Natural killer cell (primary cell): ENCODE measurements at regions of chr1 and their contacts with region 1.

Region 1: DNA sequence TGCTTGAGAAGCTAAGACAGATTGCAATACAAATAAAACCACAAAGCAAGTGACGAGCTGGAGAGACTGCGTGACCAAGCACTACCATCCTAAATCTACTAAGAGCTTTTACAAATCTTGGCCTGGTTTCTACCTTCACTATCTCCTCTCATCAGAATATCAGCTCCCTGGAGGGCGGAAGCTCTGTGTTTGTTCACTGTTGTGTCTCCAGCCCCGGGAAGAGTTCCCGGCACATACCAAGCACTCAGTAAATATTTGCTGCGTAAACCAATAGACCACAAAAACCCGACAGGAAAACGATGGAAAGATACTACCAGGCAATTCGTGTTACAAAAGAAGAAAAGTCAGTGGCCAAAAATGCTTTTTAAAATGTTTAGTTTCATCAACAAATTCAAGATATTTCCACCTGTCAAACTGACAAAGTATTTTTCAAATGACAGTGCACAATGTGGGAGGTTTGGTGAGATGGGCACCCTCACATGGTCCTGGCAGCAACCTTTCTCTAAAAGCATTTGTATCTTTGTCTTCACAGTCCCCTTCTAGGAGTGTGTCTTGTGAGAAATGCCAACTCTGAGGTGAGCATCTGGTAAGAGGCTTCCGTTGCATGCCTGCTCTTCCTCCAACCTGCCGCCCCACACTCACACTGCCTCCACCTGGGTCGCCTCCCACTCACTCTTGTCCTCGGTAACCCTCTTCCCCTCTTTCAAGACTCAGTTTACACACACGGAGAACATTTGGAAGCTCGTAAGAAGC is 34.7 kb downstream of the SLC1A7 start:
- DNase-seq: peak in 1 of 2 donors; percentile 13
- ATAC-seq: no peak
- H3K4me3 ChIP-seq: no peak overlapping the region
- H3K4me3 Mint-ChIP-seq: peak overlapping the region; percentile 69
- H3K27ac ChIP-seq: peak overlapping the region; percentile 20
- H3K27ac Mint-ChIP-seq: peak overlapping the region; percentile 27 to 90
- H3K4me1 ChIP-seq: peaks cover 47% of the 10 kb centered on the region
- H3K4me1 Mint-ChIP-seq: peaks cover 29 to 58% of the 10 kb centered on the region in 2 donors
- H3K27me3 ChIP-seq: no peaks in the 10 kb centered on the region
- H3K27me3 Mint-ChIP-seq: no peaks in the 10 kb centered on the region
- CTCF ChIP-seq: no peak

Region 2: DNA sequence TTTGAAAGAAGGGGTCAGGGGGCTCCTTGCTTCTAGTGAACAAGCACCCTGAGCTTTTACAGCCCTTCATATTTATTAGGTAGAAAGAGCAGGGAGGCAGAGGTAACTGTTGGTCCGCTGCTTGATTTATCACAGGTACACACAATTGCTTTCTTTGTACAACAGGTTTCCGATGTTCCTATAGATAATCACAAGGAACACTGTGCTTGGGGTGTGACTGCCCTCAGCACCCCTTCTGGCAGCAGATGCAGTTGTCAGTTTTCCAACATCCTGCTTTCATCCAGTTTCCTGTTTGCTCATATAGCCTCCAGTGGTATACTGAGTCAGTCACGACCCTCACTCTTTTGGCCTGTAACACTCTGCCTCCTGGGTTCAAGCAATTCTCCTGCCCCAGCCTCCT is 140.1 kb before region 1 on chr1:
- intact Hi-C with region 1: no loop called
- DNase-seq: no peak
- ATAC-seq: no peak
- H3K4me3 ChIP-seq: no peak overlapping the region
- H3K4me3 Mint-ChIP-seq: no peak overlapping the region
- H3K27ac ChIP-seq: no peak overlapping the region
- H3K27ac Mint-ChIP-seq: no peak overlapping the region
- H3K4me1 ChIP-seq: no peaks in the 10 kb centered on the region
- H3K4me1 Mint-ChIP-seq: no peaks in the 10 kb centered on the region
- H3K27me3 ChIP-seq: no peaks in the 10 kb centered on the region
- H3K27me3 Mint-ChIP-seq: no peaks in the 10 kb centered on the region
- CTCF ChIP-seq: no peak

Region 3: DNA sequence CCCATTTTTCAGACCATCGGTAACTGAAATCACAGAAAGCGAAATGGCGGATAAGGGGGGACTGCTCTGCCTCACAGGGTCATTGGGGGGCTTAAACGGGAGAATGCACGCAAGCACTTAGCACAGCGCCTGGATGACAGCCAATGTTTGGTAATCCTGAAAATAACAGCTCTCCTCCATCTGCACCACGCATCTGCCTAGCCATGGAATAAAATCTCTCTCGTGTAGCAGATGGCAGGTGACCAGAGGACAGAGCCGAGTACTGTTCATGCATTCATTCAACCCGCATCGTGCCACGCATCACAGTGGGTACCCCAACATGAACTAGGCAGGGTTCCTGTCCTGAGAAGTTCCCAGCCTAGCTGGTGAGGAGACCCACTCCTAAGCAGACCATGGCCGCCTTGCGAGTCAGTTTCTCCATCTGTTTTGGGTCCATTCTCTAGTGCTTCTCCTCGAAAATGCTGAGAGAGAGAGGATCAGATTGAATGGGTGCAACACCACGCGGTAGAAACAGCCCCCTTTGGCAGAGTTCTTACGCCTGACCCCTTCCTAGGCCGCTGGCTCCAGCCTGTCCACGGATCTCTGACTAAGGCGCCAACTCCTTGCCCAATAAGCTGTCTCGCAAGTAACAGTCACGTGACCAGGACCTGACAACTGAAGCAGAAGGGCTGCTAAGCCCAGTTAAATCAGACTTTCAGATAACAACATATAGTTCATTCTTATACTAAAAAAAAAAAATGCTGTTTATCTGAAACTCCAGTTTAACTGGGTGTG is 27.4 kb after region 1 on chr1:
- intact Hi-C with region 1: loop called (anchors 2 kb)
- DNase-seq: peak in 1 of 2 donors; percentile 31
- ATAC-seq: peak; percentile 44 to 56 (median 55)
- H3K4me3 ChIP-seq: no peak overlapping the region
- H3K4me3 Mint-ChIP-seq: peak overlapping the region; percentile 64
- H3K27ac ChIP-seq: peak overlapping the region; percentile 73
- H3K27ac Mint-ChIP-seq: peak overlapping the region; percentile 83 to 84
- H3K4me1 ChIP-seq: peaks cover 66% of the 10 kb centered on the region
- H3K4me1 Mint-ChIP-seq: peaks cover 37 to 59% of the 10 kb centered on the region in 2 donors
- H3K27me3 ChIP-seq: no peaks in the 10 kb centered on the region
- H3K27me3 Mint-ChIP-seq: peaks cover 0 to 2% of the 10 kb centered on the region in 2 donors
- CTCF ChIP-seq: no peak